Esophagus squamous epithelium (tissue), 5 donors: ENCODE measurements at regions of chr6 and their contacts with region 1.

Region 1: DNA sequence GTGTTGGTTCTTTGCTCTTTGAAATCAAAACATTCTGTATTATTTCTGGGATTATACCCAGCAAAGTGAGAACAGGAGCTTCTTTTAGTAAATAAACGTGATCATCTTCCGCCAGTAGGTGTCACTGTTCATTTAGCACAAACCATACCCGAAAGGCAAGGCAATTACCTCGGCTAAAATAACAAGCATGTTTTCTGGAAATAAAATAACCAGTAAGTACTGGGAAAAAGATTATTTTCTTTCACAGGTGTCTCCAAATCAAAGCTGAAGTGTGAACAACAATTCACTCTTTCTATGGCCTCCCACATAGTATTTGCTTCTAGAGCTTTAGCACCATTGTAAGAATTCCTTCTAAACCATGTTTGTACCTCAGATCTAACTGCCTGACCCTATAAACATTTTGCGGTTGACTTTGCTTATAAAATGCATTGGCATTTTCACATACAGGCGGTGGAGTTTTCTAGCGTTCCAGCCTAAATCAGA is 144.6 kb upstream of the AGPAT4 start:
- DNase-seq: no peak
- H3K4me3 ChIP-seq: no peak overlapping the region
- H3K27ac ChIP-seq: no peak overlapping the region
- H3K4me1 ChIP-seq: peaks cover 3 to 48% (median 17%) of the 10 kb centered on the region in 3 donors
- H3K27me3 ChIP-seq: no peaks in the 10 kb centered on the region
- CTCF ChIP-seq: peak in 5 of 6 experiments; percentile 35 to 75 (median 65)
- POLR2A ChIP-seq: no peak

Region 2: GRCh38 chr6:161694995-161695394 is 276.5 kb after region 1 on chr6:
- intact Hi-C with region 1: loop called (anchors 10 kb)
- DNase-seq: no peak
- H3K4me3 ChIP-seq: no peak overlapping the region
- H3K27ac ChIP-seq: no peak overlapping the region
- H3K4me1 ChIP-seq: no peaks in the 10 kb centered on the region
- H3K27me3 ChIP-seq: no peaks in the 10 kb centered on the region
- CTCF ChIP-seq: peak in 3 of 6 experiments; percentile 27 to 62 (median 35)
- POLR2A ChIP-seq: no peak

Region 3: DNA sequence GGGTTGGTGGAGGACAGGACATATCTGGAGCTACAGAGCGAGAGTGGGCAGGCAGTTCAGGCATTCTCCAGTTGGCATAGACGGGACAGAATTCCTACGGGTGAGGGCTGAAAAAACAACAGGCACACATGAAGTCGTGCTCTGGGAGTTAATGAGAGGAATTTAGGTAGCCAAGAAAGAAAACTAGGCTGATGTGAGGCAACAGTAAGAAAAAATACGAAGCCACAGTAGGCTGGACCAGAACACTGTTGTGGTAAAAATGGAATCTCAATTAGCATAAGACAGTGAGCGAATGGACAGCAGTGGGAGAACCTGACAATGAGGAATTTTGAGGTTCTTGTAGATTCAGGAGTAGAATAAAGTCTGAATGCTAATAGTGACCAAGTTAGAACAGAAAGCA is 343.5 kb after region 1 on chr6:
- intact Hi-C with region 1: no loop called
- DNase-seq: no peak
- H3K4me3 ChIP-seq: no peak overlapping the region
- H3K27ac ChIP-seq: no peak overlapping the region
- H3K4me1 ChIP-seq: no peaks in the 10 kb centered on the region
- H3K27me3 ChIP-seq: no peaks in the 10 kb centered on the region
- CTCF ChIP-seq: no peak
- POLR2A ChIP-seq: no peak